Ovary (tissue), 10 donors: ENCODE measurements at regions of chr11 and their contacts with region 1.

Region 1: GRCh38 chr11:57324886-57325734 is at the start of gene TNKS1BP1:
- DNase-seq: peak; percentile 97 to 99 (median 98)
- H3K4me3 ChIP-seq: peak within 1 kb of the TSS; percentile 63
- H3K27ac ChIP-seq: peak within 1 kb of the TSS; percentile 94 to 98
- H3K4me1 ChIP-seq: peaks cover 23% of the 10 kb centered on the region
- H3K27me3 ChIP-seq: no peaks in the 10 kb centered on the region
- CTCF ChIP-seq: peak in 1 of 3 donors; percentile 24
- EP300 ChIP-seq: peak; percentile 6
- POLR2A ChIP-seq: peak; percentile 73
- total RNA-seq, gene TNKS1BP1: 45.2 to 230 (median 149) TPM

Region 2: DNA sequence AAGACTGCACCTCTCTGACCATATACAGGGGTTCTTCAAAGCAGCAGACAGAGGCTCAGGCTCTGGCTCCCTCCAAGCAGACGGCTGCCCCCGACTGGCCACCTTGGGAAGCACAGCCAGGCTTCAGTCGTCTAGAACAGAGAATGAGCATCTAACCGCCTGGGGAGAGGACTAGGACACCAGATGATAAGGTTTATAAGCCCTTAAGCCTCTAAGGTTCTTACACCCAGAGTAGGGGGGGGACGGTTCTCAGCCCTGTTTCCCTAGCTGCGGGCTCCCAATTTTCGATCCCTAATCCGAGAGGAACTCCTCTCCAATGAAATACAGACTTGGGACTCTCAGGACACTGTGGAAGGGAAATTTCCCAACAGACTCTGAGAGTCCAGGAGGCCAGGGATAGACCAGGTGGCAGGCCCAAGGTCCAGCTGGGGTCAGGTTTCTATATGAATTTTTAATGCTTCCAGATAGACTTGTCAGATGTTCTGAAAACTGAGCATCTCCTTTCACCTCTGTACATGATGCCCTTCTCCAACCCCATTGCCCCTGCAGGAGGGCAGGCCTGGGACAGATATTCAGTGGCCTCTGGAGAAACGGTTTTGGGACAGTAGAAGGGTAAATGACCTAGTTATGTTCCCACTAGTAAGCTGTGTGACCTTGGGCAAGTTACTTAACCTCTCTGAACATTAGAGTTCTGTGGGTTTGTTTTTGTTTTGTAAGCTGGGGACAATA is 155.5 kb after region 1 on chr11:
- intact Hi-C with region 1: no loop called
- DNase-seq: peak in 4 of 5 donors; percentile 61 to 70 (median 66)
- H3K4me3 ChIP-seq: no peak overlapping the region
- H3K27ac ChIP-seq: no peak overlapping the region
- H3K4me1 ChIP-seq: peaks cover 10% of the 10 kb centered on the region
- H3K27me3 ChIP-seq: no peaks in the 10 kb centered on the region
- CTCF ChIP-seq: peak; percentile 26 to 36 (median 29)
- EP300 ChIP-seq: no peak
- POLR2A ChIP-seq: no peak

Region 3: DNA sequence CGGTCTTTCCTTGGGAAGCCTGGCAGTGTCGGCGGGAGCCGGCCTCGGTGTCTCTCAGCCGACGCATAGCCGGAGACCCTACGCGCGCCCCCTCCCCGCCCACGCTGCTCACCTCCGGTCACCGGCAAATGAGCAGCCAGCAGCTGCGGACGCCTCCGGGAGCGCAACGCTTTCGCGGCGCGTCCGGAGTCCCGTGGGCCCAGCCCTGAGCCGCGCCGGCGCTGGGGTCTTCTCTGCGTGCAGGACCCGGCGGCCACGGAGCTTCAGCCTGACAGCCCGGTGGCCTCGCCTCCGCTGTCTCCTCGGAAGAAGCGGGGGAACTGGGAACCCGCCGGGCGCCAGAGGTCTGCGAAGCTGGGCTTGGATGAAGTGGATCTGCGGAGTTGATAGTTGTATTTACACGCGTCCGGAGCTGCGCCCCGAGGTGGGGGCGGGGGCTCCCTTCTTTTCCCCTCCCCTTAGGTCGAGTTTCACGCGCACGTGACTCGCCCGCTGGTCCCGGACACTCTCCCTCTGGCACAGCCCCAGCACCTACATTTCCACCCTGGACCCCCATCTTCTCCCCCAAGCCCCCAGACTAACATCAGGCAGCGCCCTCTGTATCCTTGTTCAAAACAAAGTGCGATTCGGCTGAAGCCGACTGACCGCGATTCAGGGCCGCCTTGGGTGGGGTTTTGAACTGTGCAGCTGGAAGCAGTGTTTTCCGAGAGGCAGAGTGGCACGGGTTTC is 190.4 kb after region 1 on chr11 and contains the start of gene SLC43A1:
- intact Hi-C with region 1: no loop called
- DNase-seq: peak; percentile 68 to 81 (median 71)
- H3K4me3 ChIP-seq: peak within 1 kb of the TSS; percentile 91
- H3K27ac ChIP-seq: peak within 1 kb of the TSS; percentile 73 to 75
- H3K4me1 ChIP-seq: no peaks in the 10 kb centered on the region
- H3K27me3 ChIP-seq: no peaks in the 10 kb centered on the region
- CTCF ChIP-seq: no peak
- EP300 ChIP-seq: no peak
- POLR2A ChIP-seq: no peak
- total RNA-seq, gene SLC43A1: 11.5 to 23.5 (median 18.6) TPM

Region 4: DNA sequence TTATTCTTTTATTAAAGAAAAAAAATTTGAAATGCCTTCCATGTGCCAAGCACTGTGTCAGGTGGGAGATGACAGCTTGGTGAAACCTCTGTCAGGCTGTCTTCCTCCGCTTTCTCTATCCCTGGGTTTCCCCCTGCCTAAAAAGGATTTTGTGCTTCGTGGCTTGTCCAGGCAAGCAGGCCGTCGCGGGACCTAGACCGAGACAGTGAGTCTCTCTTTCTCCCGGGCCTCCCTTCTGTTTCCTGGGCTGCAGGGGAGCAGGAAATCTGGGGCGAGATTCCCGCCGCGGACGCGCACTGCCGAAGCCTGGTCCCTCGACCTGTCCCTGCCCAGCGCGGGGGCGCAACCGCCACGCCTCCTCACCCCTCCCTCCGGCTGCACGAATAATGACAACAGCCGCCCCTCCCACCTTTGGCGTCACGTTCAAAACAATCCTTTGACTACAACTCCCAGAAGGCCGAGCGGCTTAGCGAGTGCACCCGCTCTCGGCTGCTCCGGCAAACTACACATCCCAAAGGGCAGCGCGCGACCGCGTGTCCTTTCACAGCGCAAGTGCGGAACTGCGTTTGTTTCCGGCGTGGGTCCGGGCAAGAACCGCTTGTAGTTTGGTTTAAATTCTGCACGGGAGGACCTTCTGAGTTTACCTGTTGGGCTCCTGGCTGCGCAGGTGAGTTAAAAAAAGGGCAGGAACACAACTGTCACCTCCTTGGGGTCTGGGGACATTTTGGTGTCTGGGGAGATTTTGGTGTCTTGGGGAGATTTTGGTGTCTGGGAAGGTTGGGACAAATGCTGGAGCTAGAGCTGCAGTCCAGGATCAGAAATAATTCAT is 332.3 kb after region 1 on chr11 and contains the start of gene CLP1:
- intact Hi-C with region 1: loop called in 1 of 4 experiments (anchors 10 kb)
- DNase-seq: peak; percentile 99 to 100 (median 99)
- H3K4me3 ChIP-seq: peak within 1 kb of the TSS; percentile 59
- H3K27ac ChIP-seq: peak within 1 kb of the TSS; percentile 56 to 84
- H3K4me1 ChIP-seq: peaks cover 3% of the 10 kb centered on the region
- H3K27me3 ChIP-seq: no peaks in the 10 kb centered on the region
- CTCF ChIP-seq: peak in 1 of 3 donors; percentile 40
- EP300 ChIP-seq: no peak
- POLR2A ChIP-seq: peak; percentile 80
- total RNA-seq, gene CLP1: 5.5 to 11.9 (median 11.1) TPM